ENCODE measurements at regions of chr4 and their contacts with region 1.

Region 1: GRCh38 chr4:149555146-149555545 is 260.5 kb downstream of the IQCM start:
- DNase-seq: no peak
- H3K4me3 Mint-ChIP-seq: no peak overlapping the region
- H3K27ac Mint-ChIP-seq: no peak overlapping the region
- H3K4me1 Mint-ChIP-seq: no peaks in the 10 kb centered on the region
- H3K27me3 Mint-ChIP-seq: no peaks in the 10 kb centered on the region

Region 2: DNA sequence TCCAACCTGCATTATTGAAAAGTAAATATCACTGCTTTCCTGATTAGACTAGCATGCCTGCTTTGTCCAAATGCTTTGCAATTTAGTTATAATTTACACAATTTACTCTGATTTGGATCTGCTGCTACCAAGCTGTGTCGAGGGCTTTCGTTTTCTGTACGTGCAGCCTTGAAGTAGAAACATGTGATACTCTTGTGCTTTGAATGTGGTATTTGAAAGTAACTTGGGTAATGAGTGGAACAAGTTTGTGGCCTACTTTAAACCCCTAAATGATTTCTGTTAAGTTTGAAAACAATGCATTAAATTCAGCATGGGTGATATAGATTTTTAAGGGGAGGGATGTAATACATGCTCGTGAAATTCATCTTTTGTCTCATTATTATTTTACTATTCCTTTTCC is 19.8 kb after region 1 on chr4:
- CTCF ChIA-PET with region 1: no interaction called
- intact Hi-C with region 1: loop called (anchors 1 kb)
- DNase-seq: no peak
- H3K4me3 Mint-ChIP-seq: no peak overlapping the region
- H3K27ac Mint-ChIP-seq: no peak overlapping the region
- H3K4me1 Mint-ChIP-seq: no peaks in the 10 kb centered on the region
- H3K27me3 Mint-ChIP-seq: no peaks in the 10 kb centered on the region